ENCODE measurements at regions of chr5 and their contacts with region 1.

Region 1: GRCh38 chr5:149114403-149115312 is 26.6 kb upstream of the ABLIM3 start:
- DNase-seq: peak; percentile 54
- H3K4me3 ChIP-seq: no peak overlapping the region
- H3K27ac ChIP-seq: no peak overlapping the region
- H3K4me1 ChIP-seq: no peaks in the 10 kb centered on the region
- H3K27me3 ChIP-seq: no peaks in the 10 kb centered on the region
- CTCF ChIP-seq: peak; percentile 54

Region 2: DNA sequence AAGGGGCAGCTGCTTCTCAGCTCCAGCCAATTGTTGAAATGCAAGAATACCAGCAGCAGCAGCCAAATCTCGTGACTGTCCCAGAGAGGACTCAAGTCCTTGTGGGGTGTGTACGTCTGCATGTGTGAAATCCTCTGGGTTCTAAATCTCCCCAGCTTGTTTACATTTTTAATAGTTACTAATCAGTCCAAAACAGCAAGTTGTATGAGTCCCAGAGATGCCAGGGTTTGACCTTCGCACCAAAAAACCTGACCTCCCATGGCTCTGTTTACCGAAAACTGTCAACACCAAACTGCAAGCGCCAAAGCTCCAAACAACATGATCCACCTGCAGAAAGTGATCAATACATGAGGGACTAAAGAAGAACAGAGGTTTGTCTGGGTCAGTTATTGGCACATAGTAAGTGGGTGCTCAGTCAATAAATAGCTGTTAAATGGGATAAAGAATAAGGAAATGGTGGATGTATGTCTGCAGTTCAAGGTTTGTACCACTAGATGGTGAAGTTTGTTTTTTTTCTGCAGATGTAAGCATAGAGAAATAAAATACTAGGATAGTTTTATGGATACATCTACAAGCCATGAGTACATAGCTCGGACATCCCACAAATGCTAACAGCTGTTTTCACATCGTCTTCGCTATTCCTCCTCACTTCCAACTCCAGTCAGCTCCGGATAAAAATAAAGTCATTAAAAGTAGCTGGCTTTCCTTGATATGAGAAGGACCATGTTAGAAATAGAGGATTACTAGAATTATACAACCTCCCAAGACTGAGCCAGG is 373.5 kb before region 1 on chr5:
- intact Hi-C with region 1: loop called (anchors 5 kb)
- DNase-seq: peak; percentile 23
- H3K4me3 ChIP-seq: no peak overlapping the region
- H3K27ac ChIP-seq: no peak overlapping the region
- H3K4me1 ChIP-seq: no peaks in the 10 kb centered on the region
- H3K27me3 ChIP-seq: no peaks in the 10 kb centered on the region
- CTCF ChIP-seq: peak; percentile 72

Measured in colonic mucosa (tissue), 4 donors.